Right cardiac atrium (tissue), 5 donors: ENCODE measurements at regions of chr7 and their contacts with region 1.

Region 1: GRCh38 chr7:97835296-97836138 is 36.7 kb downstream of the ASNS start:
- DNase-seq: peak; percentile 50 to 85 (median 70)
- ATAC-seq: peak; percentile 59 to 66
- H3K4me3 ChIP-seq: no peak overlapping the region
- H3K27ac ChIP-seq: no peak overlapping the region
- H3K4me1 ChIP-seq: no peaks in the 10 kb centered on the region
- H3K27me3 ChIP-seq: peaks cover 3% of the 10 kb centered on the region

Region 2: DNA sequence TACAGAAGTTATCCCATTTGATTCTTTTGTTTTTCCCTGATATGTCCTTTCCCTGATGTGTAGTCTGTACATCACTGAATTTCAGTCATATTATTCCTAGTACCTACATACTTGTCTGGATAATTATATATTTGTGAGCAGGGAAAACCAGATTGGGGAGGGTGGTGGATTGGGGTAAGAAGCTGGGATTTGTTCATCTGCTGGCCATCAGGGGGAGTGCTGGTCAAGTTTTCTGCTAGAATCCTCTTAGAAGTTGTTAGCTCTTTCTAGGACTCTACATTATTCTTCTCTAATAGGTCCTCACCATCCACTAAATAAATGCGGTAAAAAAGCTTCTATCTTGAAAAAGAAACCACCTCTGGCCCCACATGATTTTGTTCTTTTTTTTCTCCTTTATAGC is 336.3 kb before region 1 on chr7:
- intact Hi-C with region 1: loop called in 1 of 4 experiments (anchors 2 kb)
- DNase-seq: no peak
- ATAC-seq: no peak
- H3K4me3 ChIP-seq: no peak overlapping the region
- H3K27ac ChIP-seq: no peak overlapping the region
- H3K4me1 ChIP-seq: no peaks in the 10 kb centered on the region
- H3K27me3 ChIP-seq: no peaks in the 10 kb centered on the region